ENCODE measurements at regions of chr2 and their contacts with region 1.

Region 1: DNA sequence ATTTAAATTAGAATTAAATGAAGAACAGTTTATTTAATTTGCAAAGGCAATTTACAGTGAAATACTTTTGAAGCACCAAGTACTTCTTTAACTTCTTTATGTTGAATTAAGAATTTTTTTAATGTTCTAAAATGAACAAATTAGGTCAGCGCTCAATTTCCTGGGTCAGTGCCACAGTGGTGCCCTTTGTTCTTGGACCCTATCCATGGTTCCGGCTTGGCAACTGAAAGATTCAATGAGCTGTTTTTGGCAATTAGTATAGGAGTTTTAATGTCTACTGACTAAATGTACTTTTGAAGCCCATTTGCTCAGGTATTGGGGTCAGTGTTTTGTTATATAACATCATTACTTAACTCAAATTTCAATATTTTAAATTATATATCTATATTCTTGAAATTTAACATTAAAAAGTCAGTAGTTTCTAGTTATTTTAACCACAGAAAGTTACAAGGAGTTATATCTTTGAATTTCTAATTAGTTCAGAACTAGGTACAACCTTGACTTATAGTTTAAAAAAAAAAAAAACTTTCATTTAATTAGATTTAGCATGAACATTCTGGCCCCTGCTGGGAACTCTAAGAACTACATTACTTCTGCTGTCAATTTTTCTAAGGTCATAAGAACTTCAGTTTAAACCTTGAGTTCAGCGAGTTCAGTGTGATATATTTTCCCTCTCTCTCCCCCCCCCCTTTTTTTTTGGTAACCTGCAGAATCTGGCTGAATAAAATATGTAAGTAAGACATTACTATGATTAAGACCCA is 7.6 kb upstream of the MSTN start:
- DNase-seq: no peak

Region 2: GRCh38 chr2:189751080-189751658 is 318.9 kb before region 1 on chr2:
- intact Hi-C with region 1: loop called (anchors 5 kb)
- DNase-seq: no peak

Region 3: GRCh38 chr2:189798312-189799029 is 271.6 kb before region 1 on chr2:
- intact Hi-C with region 1: loop called (anchors 5 kb)
- DNase-seq: no peak

Region 4: DNA sequence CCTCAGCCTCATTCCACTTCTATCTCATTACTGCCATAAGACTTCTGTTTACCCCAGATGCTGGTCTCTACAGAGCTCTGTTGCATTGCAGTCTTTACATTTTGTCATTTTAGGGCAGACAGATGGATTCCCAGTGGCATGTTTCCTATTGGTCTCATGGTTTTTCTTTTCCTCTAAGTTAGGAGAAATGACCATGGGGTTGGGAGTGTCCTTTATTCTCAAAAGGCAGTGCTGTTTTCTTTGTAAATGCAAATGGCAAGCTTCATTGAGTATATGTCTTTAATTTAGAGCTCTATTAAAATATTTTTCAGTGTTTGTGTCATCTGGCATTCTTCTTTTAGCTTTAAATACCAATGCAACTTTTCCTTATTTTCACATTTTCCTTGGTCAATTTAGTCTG is 64.6 kb before region 1 on chr2:
- intact Hi-C with region 1: no loop called
- DNase-seq: no peak